Gastrocnemius medialis (tissue), 4 donors: ENCODE measurements at regions of chr2 and their contacts with region 1.

Region 1: GRCh38 chr2:218269899-218270720 is at the starts of genes AAMP and PNKD:
- DNase-seq: peak; percentile 99 to 100
- ATAC-seq: peak; percentile 88 to 89
- H3K4me3 ChIP-seq: peak within 1 kb of the TSS; percentile 88 to 97 (median 90)
- H3K27ac ChIP-seq: peak within 1 kb of the TSS; percentile 86 to 94 (median 90)
- H3K4me1 ChIP-seq: peaks cover 38 to 51% of the 10 kb centered on the region in 2 donors
- H3K27me3 ChIP-seq: no peaks in the 10 kb centered on the region
- CTCF ChIP-seq: peak in 3 of 5 experiments; percentile 10 to 18 (median 10)
- POLR2A ChIP-seq: peak; percentile 89 to 91
- total RNA-seq, gene AAMP: 87.1 to 134 (median 96.0) TPM
- total RNA-seq, gene PNKD: 20.1 to 35.8 (median 31.9) TPM

Region 2: GRCh38 chr2:216412022-216412999 is 1857.8 kb before region 1 on chr2 and contains the start of gene SMARCAL1:
- in situ Hi-C with region 1: no loop called
- intact Hi-C with region 1: loop called (anchors 10 kb)
- DNase-seq: peak; percentile 98 to 99
- ATAC-seq: peak; percentile 96 to 97
- H3K4me3 ChIP-seq: peak within 1 kb of the TSS; percentile 91 to 98 (median 92)
- H3K27ac ChIP-seq: peak within 1 kb of the TSS; percentile 97 to 100 (median 98)
- H3K4me1 ChIP-seq: peaks cover 9 to 10% of the 10 kb centered on the region in 2 donors
- H3K27me3 ChIP-seq: no peaks in the 10 kb centered on the region
- CTCF ChIP-seq: no peak
- POLR2A ChIP-seq: peak; percentile 26 to 33
- total RNA-seq, gene SMARCAL1: 5.8 to 20.7 (median 7.8) TPM

Region 3: DNA sequence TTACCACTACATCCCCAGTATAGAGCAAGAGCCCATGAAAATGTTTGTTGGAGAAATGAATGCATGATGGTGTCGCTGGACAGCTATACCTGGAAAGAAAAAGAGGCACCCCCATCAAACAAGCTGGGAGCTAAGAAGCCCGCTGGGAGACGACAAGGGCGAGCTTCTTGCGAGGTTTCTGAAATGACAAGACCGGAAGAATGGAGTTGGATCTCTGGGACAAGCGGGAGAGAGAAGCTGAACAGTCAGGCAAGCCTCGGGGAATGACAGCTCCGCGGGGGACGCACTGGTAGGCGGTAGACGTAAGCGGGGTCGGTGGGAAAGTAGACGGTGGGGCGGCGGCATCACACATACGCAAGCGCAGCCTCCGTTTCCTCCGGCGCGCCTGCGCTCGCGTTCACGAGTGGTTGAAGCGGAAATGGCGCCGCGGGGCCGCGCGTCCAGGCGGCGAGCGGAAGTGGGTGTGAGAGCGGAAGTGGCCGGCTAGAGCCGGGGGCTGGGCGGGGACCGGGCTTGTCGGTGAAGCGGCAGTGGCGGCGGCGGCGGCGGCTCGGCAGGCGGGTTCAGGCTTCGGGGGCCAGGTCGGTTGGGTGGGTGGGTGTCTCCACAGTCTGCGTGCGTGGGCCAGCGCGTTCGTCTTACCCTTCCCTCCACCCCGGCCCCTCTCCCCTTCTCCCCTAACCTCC is 53.3 kb before region 1 on chr2 and contains the start of gene ARPC2:
- in situ Hi-C with region 1: loop called in 1 of 4 experiments (anchors 5 kb)
- intact Hi-C with region 1: loop called (anchors 1 kb)
- DNase-seq: peak; percentile 86 to 91
- ATAC-seq: peak; percentile 85 to 88
- H3K4me3 ChIP-seq: peak within 1 kb of the TSS; percentile 87 to 99 (median 94)
- H3K27ac ChIP-seq: peak within 1 kb of the TSS; percentile 96 to 99 (median 97)
- H3K4me1 ChIP-seq: peaks cover 38 to 47% of the 10 kb centered on the region in 2 donors
- H3K27me3 ChIP-seq: no peaks in the 10 kb centered on the region
- CTCF ChIP-seq: peak; percentile 9 to 46 (median 42)
- POLR2A ChIP-seq: peak; percentile 92
- total RNA-seq, gene ARPC2: 181 to 231 (median 193) TPM

Region 4: GRCh38 chr2:218292048-218293014 is 22.2 kb after region 1 on chr2 and contains the start of gene TMBIM1:
- in situ Hi-C with region 1: no loop called
- intact Hi-C with region 1: loop called (anchors 2 kb)
- DNase-seq: peak; percentile 56 to 78
- ATAC-seq: peak; percentile 74 to 83
- H3K4me3 ChIP-seq: peak within 1 kb of the TSS; percentile 71 to 100 (median 96)
- H3K27ac ChIP-seq: peak within 1 kb of the TSS; percentile 93 to 100 (median 98)
- H3K4me1 ChIP-seq: peaks cover 43 to 48% of the 10 kb centered on the region in 2 donors
- H3K27me3 ChIP-seq: no peaks in the 10 kb centered on the region
- CTCF ChIP-seq: peak; percentile 75 to 100 (median 98)
- POLR2A ChIP-seq: peak; percentile 89 to 95
- total RNA-seq, gene TMBIM1: 142 to 296 (median 215) TPM

Region 5: GRCh38 chr2:218568190-218569037 is 298.3 kb after region 1 on chr2 and contains the starts of genes CNOT9 and USP37:
- in situ Hi-C with region 1: loop called in 1 of 4 experiments (anchors 10 kb)
- intact Hi-C with region 1: no loop called
- DNase-seq: peak; percentile 99
- ATAC-seq: peak; percentile 89 to 95
- H3K4me3 ChIP-seq: peak within 1 kb of the TSS; percentile 77 to 90 (median 78)
- H3K27ac ChIP-seq: peak within 1 kb of the TSS; percentile 94 to 96 (median 96)
- H3K4me1 ChIP-seq: peaks cover 31 to 44% of the 10 kb centered on the region in 2 donors
- H3K27me3 ChIP-seq: no peaks in the 10 kb centered on the region
- CTCF ChIP-seq: no peak
- POLR2A ChIP-seq: peak; percentile 75
- total RNA-seq, gene CNOT9: 10.4 to 28.4 (median 20.5) TPM
- total RNA-seq, gene USP37: 7.0 to 12.4 (median 8.0) TPM

Region 6: DNA sequence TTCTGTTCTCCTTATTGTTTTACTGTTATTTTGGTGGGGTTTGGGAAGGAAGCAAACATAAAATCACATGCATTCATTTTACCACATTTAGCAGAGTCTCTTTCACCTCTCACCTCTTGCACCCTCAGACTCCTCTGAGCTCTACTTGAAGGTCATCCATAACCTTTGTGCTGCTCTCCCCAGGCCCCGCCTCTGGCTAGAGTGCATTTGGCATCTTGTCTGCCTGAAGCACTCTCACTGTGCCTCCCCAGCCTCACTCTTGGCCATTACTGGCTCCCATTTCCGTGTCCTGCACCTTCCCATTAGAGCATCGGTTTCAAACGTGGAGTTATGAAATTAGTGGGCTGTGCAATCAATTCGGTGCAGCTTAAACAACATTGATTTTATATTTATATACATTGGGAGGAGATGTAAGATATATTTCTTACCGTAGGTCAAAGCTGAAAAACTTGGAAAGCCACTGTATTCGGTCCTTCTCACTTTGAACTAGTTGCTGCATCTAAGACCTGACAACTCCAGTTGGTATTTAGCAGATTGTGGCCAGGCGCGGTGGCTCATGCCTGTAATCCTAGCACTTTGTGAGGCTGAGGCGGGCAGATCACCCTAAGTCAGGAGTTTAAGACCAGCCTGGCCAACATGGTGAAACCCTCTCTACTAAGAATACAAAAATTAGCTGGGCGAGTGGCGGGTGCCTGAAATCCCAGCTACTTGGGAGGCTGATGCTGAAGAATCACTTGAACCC is 929.5 kb after region 1 on chr2:
- in situ Hi-C with region 1: no loop called
- intact Hi-C with region 1: no loop called
- DNase-seq: no peak
- ATAC-seq: no peak
- H3K4me3 ChIP-seq: no peak overlapping the region
- H3K27ac ChIP-seq: no peak overlapping the region
- H3K4me1 ChIP-seq: no peaks in the 10 kb centered on the region
- H3K27me3 ChIP-seq: peaks cover 0 to 9% (median 9%) of the 10 kb centered on the region in 3 donors
- CTCF ChIP-seq: no peak
- POLR2A ChIP-seq: no peak